Common myeloid progenitor, CD34-positive (primary cell): ENCODE measurements at regions of chr1 and their contacts with region 1.

Region 1: GRCh38 chr1:17125756-17126237 is 6.5 kb upstream of the PADI2 start:
- DNase-seq: peak; percentile 80 to 88 (median 84)
- H3K4me3 ChIP-seq: no peak overlapping the region
- H3K27ac ChIP-seq: no peak overlapping the region
- H3K4me1 ChIP-seq: peaks cover 6 to 59% (median 37%) of the 10 kb centered on the region in 4 experiments
- H3K27me3 ChIP-seq: no peaks in the 10 kb centered on the region

Region 2: DNA sequence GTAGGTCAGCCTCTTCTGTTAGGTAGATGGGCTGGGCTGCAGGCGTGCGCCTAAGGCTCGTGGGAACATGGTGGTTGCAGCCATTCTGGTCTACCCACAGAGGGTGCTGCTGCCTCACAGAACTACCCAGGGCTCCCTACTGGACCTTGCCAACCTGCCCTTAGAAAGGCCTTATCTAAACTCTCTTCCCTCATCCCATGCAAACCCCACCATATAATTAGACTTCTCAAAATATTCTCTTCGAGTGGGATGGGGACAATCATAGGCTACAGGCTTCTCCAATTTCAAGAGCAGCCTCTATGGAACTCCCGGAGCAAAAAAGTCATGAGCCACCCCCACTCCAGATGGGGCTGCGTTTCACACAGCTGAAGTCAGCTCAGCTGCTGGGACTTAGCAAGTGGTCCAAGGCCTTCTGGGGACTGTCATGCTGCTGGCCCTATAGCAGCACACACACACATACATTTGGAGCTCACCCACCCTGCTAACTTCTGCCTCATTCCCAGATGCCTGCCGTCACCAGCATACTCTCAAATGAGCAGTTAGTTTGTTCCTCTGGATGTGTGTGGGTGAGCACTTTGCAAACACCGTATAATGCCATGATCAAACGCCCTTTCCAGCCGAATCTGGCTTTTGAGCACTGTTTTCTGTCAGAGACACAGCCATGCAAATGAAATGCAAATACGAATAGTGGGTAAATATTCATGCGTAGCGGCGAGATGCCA is 65.9 kb before region 1 on chr1:
- CTCF ChIA-PET with region 1: interaction called, 21 read pairs
- POLR2A ChIA-PET with region 1: no interaction called
- DNase-seq: peak; percentile 69 to 81 (median 71)
- H3K4me3 ChIP-seq: no peak overlapping the region
- H3K27ac ChIP-seq: no peak overlapping the region
- H3K4me1 ChIP-seq: peaks cover 0 to 20% (median 2%) of the 10 kb centered on the region in 4 experiments
- H3K27me3 ChIP-seq: no peaks in the 10 kb centered on the region

Region 3: DNA sequence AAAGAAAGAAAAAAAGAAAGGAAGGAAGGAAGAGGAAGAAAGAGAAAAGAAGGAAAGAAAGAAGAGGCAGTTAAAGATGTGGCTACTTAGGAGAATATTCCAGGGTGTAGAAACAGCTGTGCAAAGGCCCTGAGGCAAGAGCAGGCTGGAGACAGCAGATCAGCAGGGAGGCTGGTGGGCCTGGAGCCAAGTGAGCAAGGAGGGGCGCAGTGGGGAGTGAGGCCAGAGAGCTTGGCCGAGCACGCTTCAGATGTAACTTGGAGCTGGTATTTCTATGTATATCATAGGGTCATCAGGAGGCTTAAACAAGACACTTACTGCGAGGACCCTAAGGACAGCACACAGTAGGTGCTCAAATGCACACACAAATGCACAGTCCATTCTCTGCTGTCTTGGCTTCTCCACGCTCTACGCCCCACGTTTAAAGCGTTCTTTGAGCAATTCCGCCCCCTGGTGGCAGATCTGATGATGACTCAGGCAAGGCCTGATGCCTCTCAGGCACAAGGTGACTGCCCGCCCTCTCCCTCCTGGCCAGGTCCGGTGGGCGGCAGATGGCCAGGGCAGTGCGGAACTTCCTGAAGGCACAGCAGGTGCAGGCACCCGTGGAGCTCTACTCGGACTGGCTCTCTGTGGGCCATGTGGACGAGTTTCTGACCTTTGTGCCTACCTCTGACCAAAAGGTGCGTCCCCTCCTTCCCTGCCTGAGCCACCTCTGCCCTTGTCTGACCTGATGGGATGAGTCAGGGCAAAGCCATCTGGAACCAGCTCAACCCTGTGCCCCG is 111.2 kb after region 1 on chr1:
- CTCF ChIA-PET with region 1: interaction called, 156 read pairs
- POLR2A ChIA-PET with region 1: interaction called, 3 read pairs
- DNase-seq: peak; percentile 83 to 90 (median 85)
- H3K4me3 ChIP-seq: no peak overlapping the region
- H3K27ac ChIP-seq: no peak overlapping the region
- H3K4me1 ChIP-seq: peaks cover 0 to 19% (median 9%) of the 10 kb centered on the region in 4 experiments
- H3K27me3 ChIP-seq: peaks cover 0 to 3% (median 0%) of the 10 kb centered on the region in 5 experiments

Region 4: GRCh38 chr1:17250601-17251000 is 124.8 kb after region 1 on chr1:
- CTCF ChIA-PET with region 1: interaction called, 13 read pairs
- POLR2A ChIA-PET with region 1: interaction called, 3 read pairs
- DNase-seq: peak; percentile 90 to 99 (median 97)
- H3K4me3 ChIP-seq: peak overlapping the region in 2 of 7 experiments; percentile 8 to 24
- H3K27ac ChIP-seq: peak overlapping the region; percentile 29 to 79
- H3K4me1 ChIP-seq: peaks cover 0 to 51% (median 35%) of the 10 kb centered on the region in 4 experiments
- H3K27me3 ChIP-seq: no peaks in the 10 kb centered on the region

Region 5: DNA sequence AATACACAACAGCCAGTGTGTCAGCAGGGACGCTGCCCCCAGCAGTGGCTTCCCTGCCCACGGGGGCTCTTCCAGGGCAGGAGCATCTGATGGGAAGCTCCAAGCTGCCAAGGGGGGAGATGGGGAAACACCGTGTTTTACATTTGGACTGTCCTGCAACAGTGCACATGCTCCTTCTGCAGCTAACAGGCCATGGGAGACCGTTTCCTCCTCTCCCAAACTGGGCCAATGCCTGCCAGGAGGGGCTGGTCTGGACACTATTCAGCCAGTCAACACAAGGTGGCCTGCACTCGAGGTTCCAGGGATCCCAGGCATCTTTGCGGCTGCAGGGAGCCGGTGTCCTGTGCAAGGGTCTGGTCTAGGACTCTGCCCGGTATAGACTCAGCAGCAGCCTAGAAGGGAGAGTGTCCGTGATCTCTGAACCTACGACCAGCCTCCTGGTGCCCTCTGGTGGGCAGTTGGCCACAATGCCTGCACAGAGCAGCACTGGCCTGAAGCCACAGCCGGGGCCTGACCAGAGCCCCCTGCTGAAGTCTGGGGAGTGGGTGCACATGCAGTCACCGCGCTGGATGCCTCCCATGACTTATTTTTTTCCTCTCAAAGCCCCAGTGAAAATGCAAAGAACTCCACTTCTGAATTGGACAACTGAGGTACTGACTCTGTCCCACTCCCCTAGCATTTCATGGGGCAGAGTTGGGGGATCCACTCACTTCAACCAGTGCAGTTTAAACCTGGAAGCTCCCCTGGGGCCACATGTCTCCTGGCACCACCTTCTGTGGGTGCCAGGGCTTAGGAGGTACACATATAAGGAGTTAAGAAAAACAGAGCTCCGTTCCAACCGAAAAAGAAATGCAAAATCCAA is 280.3 kb after region 1 on chr1:
- CTCF ChIA-PET with region 1: interaction called, 16 read pairs
- POLR2A ChIA-PET with region 1: no interaction called
- DNase-seq: peak; percentile 61 to 77 (median 69)
- H3K4me3 ChIP-seq: no peak overlapping the region
- H3K27ac ChIP-seq: no peak overlapping the region
- H3K4me1 ChIP-seq: peaks cover 0 to 3% (median 0%) of the 10 kb centered on the region in 4 experiments
- H3K27me3 ChIP-seq: no peaks in the 10 kb centered on the region